Activated CD4-positive, alpha-beta T cell treated with anti-CD3 and anti-CD28 coated beads for 36 hours (primary cell): ENCODE measurements at regions of chr5 and their contacts with region 1.

Region 1: GRCh38 chr5:150357326-150358260 is at the start of gene TCOF1:
- DNase-seq: peak; percentile 99
- ATAC-seq: peak; percentile 99
- H3K4me3 Mint-ChIP-seq: peak within 1 kb of the TSS; percentile 87
- H3K27ac Mint-ChIP-seq: peak within 1 kb of the TSS; percentile 90
- H3K4me1 Mint-ChIP-seq: peaks cover 43% of the 10 kb centered on the region
- H3K27me3 Mint-ChIP-seq: no peaks in the 10 kb centered on the region
- total RNA-seq, gene TCOF1: 113 to 145 TPM

Region 2: DNA sequence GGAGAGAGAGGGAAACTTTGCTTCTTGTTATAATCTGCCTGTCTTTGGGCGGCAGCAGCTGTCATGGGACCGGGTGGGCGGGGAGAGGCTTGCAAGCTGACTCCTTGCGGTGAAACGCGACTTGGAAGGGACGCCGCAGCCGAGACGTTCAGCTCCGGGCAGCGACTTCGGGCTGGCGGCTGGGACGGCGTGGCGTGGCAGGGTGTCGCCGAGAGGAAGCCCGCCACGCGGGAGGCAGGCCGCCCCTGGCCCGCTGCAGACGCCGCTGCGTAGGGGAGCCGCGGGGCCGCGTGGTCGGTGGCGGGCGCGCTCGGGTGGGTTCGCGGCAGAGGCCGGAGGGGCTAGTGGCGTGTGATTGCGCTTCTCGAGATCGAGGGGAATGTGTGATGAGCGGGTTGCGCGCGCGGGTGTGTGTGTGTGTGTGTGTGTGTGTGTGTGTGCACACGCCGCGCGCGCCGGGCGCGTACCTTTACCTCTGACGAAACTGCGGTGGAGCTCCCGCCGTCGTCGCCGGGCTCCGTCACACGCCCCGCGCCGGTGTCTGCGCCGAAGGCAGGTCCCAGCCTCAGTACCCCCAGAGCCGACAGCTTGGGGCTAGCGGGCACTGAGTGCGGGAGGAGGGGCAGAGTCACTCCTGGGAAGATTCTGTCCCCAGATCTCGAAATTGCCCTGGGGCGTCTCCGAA is 625.8 kb before region 1 on chr5:
- CTCF ChIA-PET with region 1: no interaction called
- POLR2A ChIA-PET with region 1: no interaction called
- intact Hi-C with region 1: loop called in 1 of 2 experiments (anchors 2 kb)
- DNase-seq: peak; percentile 90
- ATAC-seq: peak; percentile 48
- H3K4me3 Mint-ChIP-seq: peak overlapping the region; percentile 79
- H3K27ac Mint-ChIP-seq: no peak overlapping the region
- H3K4me1 Mint-ChIP-seq: peaks cover 2% of the 10 kb centered on the region
- H3K27me3 Mint-ChIP-seq: no peaks in the 10 kb centered on the region

Region 3: DNA sequence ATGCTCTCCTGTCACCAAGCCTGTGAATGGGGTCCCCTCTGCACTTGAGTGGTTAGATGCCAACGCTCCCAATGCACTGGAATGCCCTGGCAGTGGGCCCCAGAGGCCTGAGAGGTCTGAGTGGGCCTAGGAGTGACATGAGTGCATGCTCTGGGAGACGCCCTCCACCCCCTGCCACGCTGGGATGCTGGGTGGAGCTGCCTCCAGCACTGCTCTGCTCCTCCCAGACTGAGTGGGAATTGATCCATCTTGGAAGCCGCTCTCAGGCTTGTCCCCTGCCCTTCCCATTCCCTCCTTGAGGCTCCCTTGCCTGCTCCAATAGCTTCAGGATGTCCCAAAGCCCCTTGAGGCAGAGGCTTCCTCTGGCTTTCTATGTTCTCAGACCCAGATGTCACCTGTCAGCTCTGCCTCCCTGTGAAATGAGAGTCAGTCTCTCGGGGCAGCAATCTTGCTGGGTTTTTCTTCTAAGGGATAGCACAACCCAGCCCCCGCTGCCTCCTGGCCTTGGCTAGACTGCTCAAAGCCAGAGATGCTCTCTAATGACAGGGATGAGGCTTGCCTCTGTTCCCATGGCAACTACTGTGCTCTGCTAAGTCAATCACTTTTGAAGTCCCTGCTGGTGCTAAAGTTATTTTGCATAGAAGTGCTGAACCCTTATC is 48.2 kb before region 1 on chr5:
- CTCF ChIA-PET with region 1: no interaction called
- POLR2A ChIA-PET with region 1: no interaction called
- intact Hi-C with region 1: no loop called
- DNase-seq: no peak
- ATAC-seq: no peak
- H3K4me3 Mint-ChIP-seq: no peak overlapping the region
- H3K27ac Mint-ChIP-seq: no peak overlapping the region
- H3K4me1 Mint-ChIP-seq: no peaks in the 10 kb centered on the region
- H3K27me3 Mint-ChIP-seq: peaks cover 3% of the 10 kb centered on the region

Region 4: DNA sequence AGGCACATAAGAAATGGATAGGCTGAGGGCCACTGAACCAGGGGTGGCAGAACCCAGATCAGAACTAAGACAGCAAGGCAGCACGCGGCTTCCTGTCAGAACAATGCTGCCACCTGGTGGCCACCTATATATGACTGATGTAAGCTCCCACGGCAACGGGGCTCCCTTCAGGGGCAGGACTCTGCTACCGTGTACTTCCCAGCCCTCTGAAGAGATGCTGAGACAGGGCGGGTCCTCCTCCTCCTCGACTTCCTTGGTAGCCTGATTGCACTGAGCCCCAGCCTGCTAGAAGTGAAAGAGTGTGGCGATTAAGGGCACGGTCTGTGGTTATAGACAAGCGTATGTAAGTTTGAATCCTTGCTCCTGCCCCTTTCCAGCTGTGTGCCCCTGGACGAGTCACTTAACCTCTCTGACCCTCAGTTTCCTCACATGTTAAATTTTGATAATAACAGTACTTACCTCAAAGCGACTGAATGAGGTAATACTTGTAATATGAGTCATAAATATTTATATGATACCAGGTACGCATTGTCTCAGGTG is 78.6 kb after region 1 on chr5:
- CTCF ChIA-PET with region 1: no interaction called
- POLR2A ChIA-PET with region 1: no interaction called
- intact Hi-C with region 1: loop called (anchors 1 to 2 kb)
- DNase-seq: peak; percentile 95
- ATAC-seq: peak; percentile 98
- H3K4me3 Mint-ChIP-seq: no peak overlapping the region
- H3K27ac Mint-ChIP-seq: peak overlapping the region; percentile 75
- H3K4me1 Mint-ChIP-seq: peaks cover 8% of the 10 kb centered on the region
- H3K27me3 Mint-ChIP-seq: no peaks in the 10 kb centered on the region

Region 5: GRCh38 chr5:150615141-150615699 is 257.6 kb after region 1 on chr5:
- CTCF ChIA-PET with region 1: no interaction called
- POLR2A ChIA-PET with region 1: no interaction called
- intact Hi-C with region 1: no loop called
- DNase-seq: no peak
- ATAC-seq: no peak
- H3K4me3 Mint-ChIP-seq: no peak overlapping the region
- H3K27ac Mint-ChIP-seq: no peak overlapping the region
- H3K4me1 Mint-ChIP-seq: peaks cover 2% of the 10 kb centered on the region
- H3K27me3 Mint-ChIP-seq: peaks cover 3% of the 10 kb centered on the region

Region 6: DNA sequence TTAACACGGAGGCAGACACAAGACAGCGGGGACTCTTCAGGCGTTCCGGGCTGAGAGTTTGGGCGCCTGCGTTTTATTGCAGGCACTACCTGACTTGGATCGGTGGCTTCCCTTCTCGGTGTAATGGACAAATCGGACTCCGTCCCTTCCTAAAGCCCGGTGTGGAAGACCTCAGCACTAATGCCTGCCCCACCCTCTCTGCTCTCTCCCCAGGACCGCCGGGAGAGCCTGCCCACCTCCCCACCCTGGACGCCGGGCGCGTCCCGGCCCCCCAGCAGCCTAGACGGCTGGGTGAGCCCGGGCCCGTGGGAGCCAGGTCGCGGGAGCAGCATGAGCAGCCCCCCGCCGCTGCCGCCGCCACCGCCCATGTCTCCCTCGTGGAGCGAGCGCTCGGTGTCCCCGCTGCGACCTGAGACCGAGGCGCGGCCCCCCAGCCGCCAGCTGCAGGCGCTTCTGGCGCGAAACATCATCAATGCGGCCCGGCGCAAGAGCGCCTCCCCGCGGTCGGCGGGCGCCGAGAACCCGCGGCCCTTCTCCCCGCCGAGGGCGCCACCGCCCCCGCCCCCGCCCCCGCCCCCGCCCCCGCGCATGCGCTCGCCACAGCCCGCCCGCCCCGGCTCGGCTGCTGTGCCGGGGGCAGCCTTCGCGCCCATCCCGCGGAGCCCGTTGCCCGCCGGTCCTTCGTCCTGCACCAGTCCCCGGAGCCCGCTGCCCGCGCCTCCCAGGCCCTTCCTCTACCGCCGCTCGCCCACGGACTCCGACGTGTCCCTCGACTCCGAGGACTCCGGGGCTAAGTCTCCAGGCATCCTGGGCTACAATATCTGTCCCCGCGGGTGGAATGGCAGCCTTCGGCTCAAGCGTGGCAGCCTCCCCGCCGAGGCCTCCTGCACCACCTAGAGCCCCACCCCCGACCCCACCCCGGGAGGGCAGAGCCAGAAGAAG is 298.9 kb after region 1 on chr5:
- CTCF ChIA-PET with region 1: no interaction called
- POLR2A ChIA-PET with region 1: no interaction called
- intact Hi-C with region 1: loop called in 1 of 2 experiments (anchors 5 kb)
- DNase-seq: peak; percentile 82
- ATAC-seq: peak; percentile 82
- H3K4me3 Mint-ChIP-seq: peak overlapping the region; percentile 63
- H3K27ac Mint-ChIP-seq: no peak overlapping the region
- H3K4me1 Mint-ChIP-seq: no peaks in the 10 kb centered on the region
- H3K27me3 Mint-ChIP-seq: no peaks in the 10 kb centered on the region